ENCODE measurements at regions of chr17 and their contacts with region 1.

Region 1: GRCh38 chr17:33520426-33521330 is 227.6 kb upstream of the ASIC2 start:
- DNase-seq: peak; percentile 23
- ATAC-seq: peak; percentile 86
- H3K4me3 ChIP-seq: no peak overlapping the region
- H3K27ac ChIP-seq: no peak overlapping the region
- H3K4me1 ChIP-seq: no peaks in the 10 kb centered on the region
- H3K27me3 ChIP-seq: no peaks in the 10 kb centered on the region
- CTCF ChIP-seq: peak; percentile 70
- EP300 ChIP-seq: no peak
- POLR2A ChIP-seq: no peak
- RAD21 ChIP-seq: no peak

Region 2: GRCh38 chr17:33049781-33050414 is 470.8 kb before region 1 on chr17:
- CTCF ChIA-PET with region 1: no interaction called
- POLR2A ChIA-PET with region 1: no interaction called
- in situ Hi-C with region 1: loop called (anchors 25 kb)
- intact Hi-C with region 1: no loop called
- DNase-seq: peak; percentile 44
- ATAC-seq: peak; percentile 75
- H3K4me3 ChIP-seq: no peak overlapping the region
- H3K27ac ChIP-seq: no peak overlapping the region
- H3K4me1 ChIP-seq: peaks cover 8% of the 10 kb centered on the region; the same call in 1 of the 2 replicates
- H3K27me3 ChIP-seq: peaks cover 2 to 12% of the 10 kb centered on the region in 2 experiments; a peak in 1 of 5 replicates
- CTCF ChIP-seq: peak; percentile 71
- EP300 ChIP-seq: no peak
- POLR2A ChIP-seq: no peak
- RAD21 ChIP-seq: no peak

Region 3: DNA sequence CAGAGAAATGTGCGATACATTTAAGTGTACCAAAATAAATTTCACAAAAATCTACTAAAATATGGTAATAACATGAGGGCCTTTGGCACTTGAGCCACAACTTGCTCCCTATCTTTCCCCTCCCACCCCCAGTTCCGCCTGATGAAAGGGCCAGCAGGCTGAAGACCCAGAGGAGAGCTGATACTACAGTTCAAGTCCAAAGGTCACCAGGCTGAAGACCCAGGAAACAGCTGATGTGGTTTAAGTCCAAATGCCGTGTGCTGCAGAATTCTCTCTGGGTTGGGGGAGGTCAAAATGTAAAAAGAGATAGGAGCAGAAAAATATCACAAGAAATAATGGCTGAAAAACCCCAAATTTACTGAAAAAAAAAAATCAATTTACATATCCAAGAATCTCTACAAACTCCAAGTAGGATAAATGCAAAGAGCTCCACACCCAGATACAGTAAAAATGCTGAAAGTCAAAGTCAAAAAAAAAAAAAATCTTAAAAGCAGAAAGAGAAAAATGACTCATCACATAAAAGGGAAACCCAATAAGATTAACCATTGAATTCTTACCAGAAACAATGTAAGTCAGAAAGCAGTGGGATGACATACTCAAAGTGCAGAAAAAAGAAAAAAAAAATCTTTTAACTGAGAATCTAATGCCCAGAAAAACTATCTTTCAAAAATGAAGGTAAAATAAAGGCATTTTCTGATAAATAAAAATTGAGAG is 224.5 kb after region 1 on chr17:
- CTCF ChIA-PET with region 1: interaction called, 7 read pairs
- POLR2A ChIA-PET with region 1: no interaction called
- in situ Hi-C with region 1: loop called (anchors 10 kb)
- intact Hi-C with region 1: no loop called
- DNase-seq: peak; percentile 23
- ATAC-seq: no peak; the same call in 2 of the 3 replicates
- H3K4me3 ChIP-seq: no peak overlapping the region
- H3K27ac ChIP-seq: no peak overlapping the region
- H3K4me1 ChIP-seq: peaks cover 8% of the 10 kb centered on the region
- H3K27me3 ChIP-seq: no peaks in the 10 kb centered on the region
- CTCF ChIP-seq: no peak
- EP300 ChIP-seq: no peak
- POLR2A ChIP-seq: no peak
- RAD21 ChIP-seq: no peak

Measured in HepG2 (cell line).